T-cell (primary cell): ENCODE measurements at regions of chr13 and their contacts with region 1.

Region 1: GRCh38 chr13:97191142-97191541 is 31.0 kb upstream of the MBNL2 start:
- DNase-seq: no peak
- ATAC-seq: no peak
- H3K4me3 ChIP-seq: no peak overlapping the region
- H3K4me3 Mint-ChIP-seq: no peak overlapping the region
- H3K27ac ChIP-seq: no peak overlapping the region
- H3K27ac Mint-ChIP-seq: no peak overlapping the region
- H3K4me1 ChIP-seq: peaks cover 0 to 7% of the 10 kb centered on the region in 2 experiments
- H3K4me1 Mint-ChIP-seq: peaks cover 6 to 14% (median 7%) of the 10 kb centered on the region in 3 donors
- H3K27me3 ChIP-seq: no peaks in the 10 kb centered on the region
- H3K27me3 Mint-ChIP-seq: peaks cover 2 to 12% of the 10 kb centered on the region in 2 donors

Region 2: DNA sequence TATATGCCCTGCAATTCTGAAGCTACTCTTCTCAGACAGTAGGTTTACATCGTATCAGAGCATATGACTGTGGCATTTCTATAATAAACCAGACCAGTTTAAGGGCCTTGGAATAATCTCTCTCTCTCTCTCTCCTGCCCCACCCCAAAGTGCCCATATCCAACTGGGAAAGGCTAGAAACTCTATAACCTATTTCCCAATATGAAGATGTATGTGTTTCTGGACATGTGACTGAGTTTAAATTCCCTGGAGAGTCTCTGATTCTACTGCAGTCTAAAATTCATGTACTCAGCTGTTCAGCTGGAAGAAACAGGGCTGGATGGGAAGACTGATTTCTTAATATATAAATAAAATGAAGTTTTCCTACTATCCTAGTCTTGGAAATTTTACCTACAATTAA is 61.0 kb before region 1 on chr13:
- CTCF ChIA-PET with region 1: no interaction called
- POLR2A ChIA-PET with region 1: interaction called in 1 of 2 experiments, 10 read pairs
- DNase-seq: no peak
- ATAC-seq: no peak
- H3K4me3 ChIP-seq: no peak overlapping the region
- H3K4me3 Mint-ChIP-seq: no peak overlapping the region
- H3K27ac ChIP-seq: no peak overlapping the region
- H3K27ac Mint-ChIP-seq: no peak overlapping the region
- H3K4me1 ChIP-seq: no peaks in the 10 kb centered on the region
- H3K4me1 Mint-ChIP-seq: no peaks in the 10 kb centered on the region
- H3K27me3 ChIP-seq: peaks cover 0 to 8% of the 10 kb centered on the region in 2 experiments
- H3K27me3 Mint-ChIP-seq: peaks cover 8% of the 10 kb centered on the region in 2 donors